PC-9 (cell line): ENCODE measurements at regions of chr3 and their contacts with region 1.

Region 1: DNA sequence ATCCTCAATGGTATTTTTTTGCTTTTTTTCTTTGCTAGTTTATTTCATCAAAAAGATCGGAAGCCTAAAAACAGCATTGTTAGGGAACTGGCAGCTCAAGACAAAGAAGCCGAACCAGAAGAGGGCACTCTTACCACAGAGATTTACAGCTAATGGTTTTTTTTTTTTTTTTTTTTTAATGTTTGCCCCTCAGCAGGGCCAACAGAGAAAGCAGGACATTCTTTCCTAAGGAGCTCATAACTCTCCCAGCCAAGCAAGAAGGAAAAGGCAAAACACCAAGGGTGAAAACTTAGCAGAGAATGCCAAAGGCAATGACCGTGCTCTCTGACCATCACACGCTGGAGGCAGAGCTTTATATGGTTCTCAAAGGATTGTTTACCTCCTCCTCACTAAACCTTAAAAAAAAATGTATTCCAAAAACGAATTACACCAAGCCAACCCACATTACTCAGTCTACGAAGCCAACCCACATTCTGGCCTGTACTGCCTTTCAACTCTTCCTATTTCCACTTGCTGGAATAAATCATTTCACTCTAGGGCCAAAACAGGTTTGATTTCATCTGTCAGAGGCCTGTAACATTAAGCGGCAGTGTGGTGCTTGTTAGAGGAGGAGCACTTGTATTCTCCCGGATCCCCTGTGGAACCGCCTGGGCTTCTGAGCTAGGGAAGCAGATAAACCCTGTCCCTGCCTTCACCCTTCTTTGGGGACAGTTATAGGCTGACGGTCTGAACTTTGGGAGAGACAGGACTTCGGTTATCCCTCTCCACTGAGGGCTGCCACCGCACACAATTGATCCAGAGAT is 35.6 kb upstream of the GYG1 start:
- DNase-seq: peak; percentile 50 to 80
- H3K4me3 ChIP-seq: no peak overlapping the region
- H3K27ac ChIP-seq: peak overlapping the region; percentile 28; the same call in 1 of the 2 replicates
- H3K4me1 ChIP-seq: peaks cover 7% of the 10 kb centered on the region; the same call in 1 of the 2 replicates
- H3K27me3 ChIP-seq: no peaks in the 10 kb centered on the region
- CTCF ChIP-seq: peak; percentile 72

Region 2: GRCh38 chr3:147758771-147759170 is 1197.0 kb before region 1 on chr3:
- CTCF ChIA-PET with region 1: no interaction called
- POLR2A ChIA-PET with region 1: no interaction called
- intact Hi-C with region 1: no loop called
- DNase-seq: no peak
- H3K4me3 ChIP-seq: no peak overlapping the region
- H3K27ac ChIP-seq: no peak overlapping the region
- H3K4me1 ChIP-seq: no peaks in the 10 kb centered on the region
- H3K27me3 ChIP-seq: no peaks in the 10 kb centered on the region
- CTCF ChIP-seq: no peak

Region 3: GRCh38 chr3:148923592-148923991 is 32.2 kb before region 1 on chr3:
- CTCF ChIA-PET with region 1: no interaction called
- POLR2A ChIA-PET with region 1: no interaction called
- intact Hi-C with region 1: no loop called
- DNase-seq: no peak
- H3K4me3 ChIP-seq: no peak overlapping the region
- H3K27ac ChIP-seq: no peak overlapping the region
- H3K4me1 ChIP-seq: 0 out of 2 replicates have a peak, but pooled peaks cover 8% of the 10 kb centered on the region
- H3K27me3 ChIP-seq: no peaks in the 10 kb centered on the region
- CTCF ChIP-seq: no peak

Region 4: GRCh38 chr3:148992635-148993255 is 37.0 kb after region 1 on chr3:
- CTCF ChIA-PET with region 1: no interaction called
- POLR2A ChIA-PET with region 1: no interaction called
- intact Hi-C with region 1: no loop called
- DNase-seq: no peak
- H3K4me3 ChIP-seq: peak overlapping the region; percentile 81; the same call in 1 of the 2 replicates
- H3K27ac ChIP-seq: no peak overlapping the region
- H3K4me1 ChIP-seq: peaks cover 10% of the 10 kb centered on the region; the same call in 1 of the 2 replicates
- H3K27me3 ChIP-seq: no peaks in the 10 kb centered on the region
- CTCF ChIP-seq: no peak

Region 5: GRCh38 chr3:149067883-149068282 is 112.1 kb after region 1 on chr3:
- CTCF ChIA-PET with region 1: interaction called, 11 read pairs
- POLR2A ChIA-PET with region 1: no interaction called
- intact Hi-C with region 1: no loop called
- DNase-seq: no peak
- H3K4me3 ChIP-seq: no peak overlapping the region
- H3K27ac ChIP-seq: no peak overlapping the region
- H3K4me1 ChIP-seq: no peaks in the 10 kb centered on the region
- H3K27me3 ChIP-seq: no peaks in the 10 kb centered on the region
- CTCF ChIP-seq: no peak

Region 6: GRCh38 chr3:149134575-149134974 is 178.8 kb after region 1 on chr3:
- CTCF ChIA-PET with region 1: interaction called, 21 read pairs
- POLR2A ChIA-PET with region 1: no interaction called
- intact Hi-C with region 1: no loop called
- DNase-seq: no peak
- H3K4me3 ChIP-seq: no peak overlapping the region
- H3K27ac ChIP-seq: no peak overlapping the region
- H3K4me1 ChIP-seq: peaks cover 13% of the 10 kb centered on the region
- H3K27me3 ChIP-seq: no peaks in the 10 kb centered on the region
- CTCF ChIP-seq: no peak

Region 7: DNA sequence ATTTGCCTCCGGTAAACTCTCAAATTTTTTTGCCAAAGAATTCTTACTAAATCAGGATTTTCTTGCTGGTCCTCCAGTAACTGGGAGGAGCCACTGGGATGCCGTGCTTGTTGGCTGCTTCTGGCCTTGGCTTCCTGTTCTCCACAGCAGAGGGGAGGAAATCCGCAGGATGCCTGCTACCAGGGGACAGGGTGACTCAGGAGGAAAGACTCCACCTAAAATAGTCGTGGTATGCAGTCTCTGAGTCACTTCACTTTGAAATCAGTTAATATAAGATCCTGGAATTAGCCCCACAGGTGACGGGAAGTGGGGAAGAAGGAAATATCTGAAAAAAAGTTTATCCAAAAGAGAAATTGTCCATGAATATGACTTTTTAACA is 384.2 kb after region 1 on chr3:
- CTCF ChIA-PET with region 1: no interaction called
- POLR2A ChIA-PET with region 1: interaction called, 19 read pairs
- intact Hi-C with region 1: no loop called
- DNase-seq: peak; percentile 93 to 98
- H3K4me3 ChIP-seq: peak overlapping the region; percentile 20; the same call in 1 of the 2 replicates
- H3K27ac ChIP-seq: peak overlapping the region; percentile 97
- H3K4me1 ChIP-seq: peaks cover 41% of the 10 kb centered on the region
- H3K27me3 ChIP-seq: no peaks in the 10 kb centered on the region
- CTCF ChIP-seq: no peak

Region 8: DNA sequence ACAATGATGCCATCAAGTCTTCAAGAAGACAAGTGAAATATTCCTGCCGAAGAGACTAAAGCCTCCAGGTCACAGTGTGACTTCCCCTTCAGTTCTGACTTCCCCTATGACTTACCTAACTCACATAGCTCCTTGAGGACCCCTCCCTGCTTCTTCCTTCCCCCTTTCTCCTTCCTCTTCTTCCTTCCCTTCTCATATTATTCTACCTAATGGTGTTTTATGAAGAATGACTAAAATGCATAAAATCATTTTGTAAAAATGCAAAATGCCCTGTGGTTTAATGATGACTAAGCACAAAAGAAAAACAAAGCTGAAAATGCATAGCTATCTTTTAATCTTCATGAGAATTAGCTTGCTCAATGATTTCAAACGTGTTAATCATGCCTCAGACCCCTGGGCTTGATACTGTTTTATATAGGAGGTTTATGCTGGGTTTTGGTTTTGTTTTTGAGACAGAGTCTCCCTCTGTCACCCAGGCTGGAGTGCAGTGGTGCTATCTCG is 492.6 kb after region 1 on chr3:
- CTCF ChIA-PET with region 1: interaction called, 3 read pairs
- POLR2A ChIA-PET with region 1: interaction called, 16 read pairs
- intact Hi-C with region 1: no loop called
- DNase-seq: peak; percentile 22 to 81
- H3K4me3 ChIP-seq: no peak overlapping the region
- H3K27ac ChIP-seq: peak overlapping the region; percentile 81
- H3K4me1 ChIP-seq: peaks cover 36% of the 10 kb centered on the region
- H3K27me3 ChIP-seq: no peaks in the 10 kb centered on the region
- CTCF ChIP-seq: no peak

Region 9: GRCh38 chr3:149581681-149582370 is 626.1 kb after region 1 on chr3:
- CTCF ChIA-PET with region 1: no interaction called
- POLR2A ChIA-PET with region 1: interaction called, 10 read pairs
- intact Hi-C with region 1: no loop called
- DNase-seq: peak; percentile 87 to 97
- H3K4me3 ChIP-seq: peak overlapping the region; percentile 37; the same call in 1 of the 2 replicates
- H3K27ac ChIP-seq: peak overlapping the region; percentile 98
- H3K4me1 ChIP-seq: peaks cover 94% of the 10 kb centered on the region
- H3K27me3 ChIP-seq: no peaks in the 10 kb centered on the region
- CTCF ChIP-seq: no peak